Panc1 (cell line): ENCODE measurements at regions of chrX and their contacts with region 1.

Region 1: DNA sequence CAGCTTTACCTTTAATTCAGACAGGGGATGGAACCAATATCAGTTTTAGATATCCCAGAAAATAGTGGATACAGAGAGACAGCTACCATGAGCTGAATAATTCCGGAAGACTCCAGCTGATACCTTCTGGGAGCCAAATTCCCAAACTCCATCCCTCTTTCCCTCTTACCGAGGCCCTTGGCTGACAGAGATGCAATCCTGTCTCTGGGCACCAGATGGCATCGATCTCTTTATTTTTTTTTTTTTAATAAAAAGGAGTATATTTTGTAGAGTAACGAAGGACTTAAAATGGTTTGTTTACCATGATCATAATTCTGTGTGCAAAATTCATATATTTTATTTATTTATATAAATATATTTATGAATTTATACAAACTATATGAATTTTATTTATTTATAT is 31.0 kb downstream of the RAB40A start:
- DNase-seq: no peak
- ATAC-seq: no peak
- H3K4me3 ChIP-seq: no peak overlapping the region
- H3K27ac ChIP-seq: no peak overlapping the region
- H3K4me1 ChIP-seq: no peaks in the 10 kb centered on the region
- H3K27me3 ChIP-seq: peaks cover 4% of the 10 kb centered on the region; the same call in 1 of the 2 replicates
- CTCF ChIP-seq: peak; percentile 67

Region 2: GRCh38 chrX:103413705-103414387 is 74.5 kb before region 1 on chrX:
- CTCF ChIA-PET with region 1: no interaction called
- POLR2A ChIA-PET with region 1: no interaction called
- in situ Hi-C with region 1: no loop called
- intact Hi-C with region 1: no loop called
- DNase-seq: no peak
- ATAC-seq: no peak
- H3K4me3 ChIP-seq: no peak overlapping the region
- H3K27ac ChIP-seq: no peak overlapping the region
- H3K4me1 ChIP-seq: no peaks in the 10 kb centered on the region
- H3K27me3 ChIP-seq: no peaks in the 10 kb centered on the region
- CTCF ChIP-seq: no peak

Region 3: DNA sequence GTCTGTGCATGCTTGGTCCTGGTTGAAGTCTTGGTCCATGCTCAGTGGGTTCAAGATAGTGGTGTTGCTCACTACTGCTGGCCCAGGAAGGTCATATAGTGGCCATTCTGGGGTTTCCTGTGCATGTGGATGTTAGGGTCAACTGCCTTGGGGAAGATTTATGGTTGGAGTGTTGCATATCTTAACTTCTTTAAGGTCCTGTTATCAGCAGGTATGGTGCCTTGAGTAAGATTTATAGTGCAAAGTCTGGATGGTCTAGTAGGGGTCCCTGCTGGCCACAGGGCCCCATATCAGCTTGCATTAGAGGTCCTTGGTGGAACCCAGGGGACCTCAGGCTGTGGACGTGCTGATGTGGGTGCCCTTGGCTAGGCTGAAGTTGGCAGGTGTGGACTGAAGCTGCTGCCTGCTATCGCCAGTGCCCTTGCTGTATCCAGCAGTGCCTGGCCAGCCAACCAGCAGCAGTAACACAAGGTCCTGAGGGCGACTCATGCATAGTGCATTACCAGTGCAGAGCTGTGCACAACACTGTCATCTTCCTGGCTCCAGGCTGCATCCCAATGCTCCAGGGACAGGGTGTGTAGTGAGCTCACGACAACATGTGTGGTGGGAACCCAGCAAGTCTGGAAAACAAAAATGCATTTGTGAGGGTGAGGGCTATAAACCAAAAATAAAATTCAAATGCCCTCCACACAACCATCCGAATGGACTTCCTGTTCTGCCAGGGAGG is 51.0 kb before region 1 on chrX:
- CTCF ChIA-PET with region 1: no interaction called
- POLR2A ChIA-PET with region 1: no interaction called
- in situ Hi-C with region 1: no loop called
- intact Hi-C with region 1: no loop called
- DNase-seq: no peak
- ATAC-seq: no peak
- H3K4me3 ChIP-seq: no peak overlapping the region
- H3K27ac ChIP-seq: no peak overlapping the region
- H3K4me1 ChIP-seq: no peaks in the 10 kb centered on the region
- H3K27me3 ChIP-seq: no peaks in the 10 kb centered on the region
- CTCF ChIP-seq: no peak

Region 4: DNA sequence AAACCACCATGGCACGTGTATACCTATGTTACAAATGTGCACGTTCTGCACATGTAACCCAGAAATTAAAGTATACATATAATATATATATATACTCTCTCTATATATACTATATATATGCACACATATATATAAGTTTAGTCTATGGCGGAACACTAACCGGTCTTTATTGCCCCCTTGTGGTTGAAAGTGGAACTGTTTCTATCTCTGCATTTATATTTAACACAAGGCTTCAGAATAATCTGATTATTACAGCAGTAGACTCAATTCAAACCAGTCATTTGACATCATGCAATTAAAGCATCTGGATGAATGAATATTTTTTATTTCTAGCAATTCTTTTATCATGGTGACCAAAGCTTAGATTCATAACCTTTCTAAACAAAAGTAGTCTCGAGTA is 329.2 kb after region 1 on chrX:
- CTCF ChIA-PET with region 1: no interaction called
- POLR2A ChIA-PET with region 1: no interaction called
- in situ Hi-C with region 1: no loop called
- intact Hi-C with region 1: loop called (anchors 5 kb)
- DNase-seq: peak; percentile 46
- ATAC-seq: peak; percentile 88
- H3K4me3 ChIP-seq: no peak overlapping the region
- H3K27ac ChIP-seq: no peak overlapping the region
- H3K4me1 ChIP-seq: no peaks in the 10 kb centered on the region
- H3K27me3 ChIP-seq: no peaks in the 10 kb centered on the region
- CTCF ChIP-seq: peak; percentile 70; the same call in 1 of the 2 replicates